Esophagus muscularis mucosa (tissue), 4 donors: ENCODE measurements at regions of chr3 and their contacts with region 1.

Region 1: DNA sequence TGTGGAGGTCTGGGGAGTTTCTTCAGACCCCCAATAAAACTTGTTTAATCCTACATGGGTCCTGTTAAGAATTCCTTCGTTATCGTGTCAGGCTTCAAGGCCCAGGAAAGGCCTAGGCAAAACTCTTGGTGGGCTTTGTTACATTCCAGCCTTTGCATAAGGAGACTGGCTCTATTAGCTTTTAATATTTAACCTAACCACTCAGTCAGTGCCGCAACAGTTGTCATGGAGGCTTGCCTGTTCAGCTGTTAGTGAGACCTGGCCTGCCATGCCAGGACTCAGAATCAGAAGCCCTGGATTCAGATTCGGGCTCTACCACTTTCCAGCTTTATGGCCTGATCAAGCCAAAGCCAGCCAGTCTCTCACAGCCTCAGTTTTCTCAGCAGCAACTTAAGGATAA is 19.6 kb downstream of the EIF1B start:
- DNase-seq: no peak
- H3K4me3 ChIP-seq: no peak overlapping the region
- H3K27ac ChIP-seq: no peak overlapping the region
- H3K4me1 ChIP-seq: peaks cover 0 to 5% (median 1%) of the 10 kb centered on the region in 4 donors
- H3K27me3 ChIP-seq: no peaks in the 10 kb centered on the region
- CTCF ChIP-seq: no peak
- EP300 ChIP-seq: no peak
- POLR2A ChIP-seq: no peak

Region 2: DNA sequence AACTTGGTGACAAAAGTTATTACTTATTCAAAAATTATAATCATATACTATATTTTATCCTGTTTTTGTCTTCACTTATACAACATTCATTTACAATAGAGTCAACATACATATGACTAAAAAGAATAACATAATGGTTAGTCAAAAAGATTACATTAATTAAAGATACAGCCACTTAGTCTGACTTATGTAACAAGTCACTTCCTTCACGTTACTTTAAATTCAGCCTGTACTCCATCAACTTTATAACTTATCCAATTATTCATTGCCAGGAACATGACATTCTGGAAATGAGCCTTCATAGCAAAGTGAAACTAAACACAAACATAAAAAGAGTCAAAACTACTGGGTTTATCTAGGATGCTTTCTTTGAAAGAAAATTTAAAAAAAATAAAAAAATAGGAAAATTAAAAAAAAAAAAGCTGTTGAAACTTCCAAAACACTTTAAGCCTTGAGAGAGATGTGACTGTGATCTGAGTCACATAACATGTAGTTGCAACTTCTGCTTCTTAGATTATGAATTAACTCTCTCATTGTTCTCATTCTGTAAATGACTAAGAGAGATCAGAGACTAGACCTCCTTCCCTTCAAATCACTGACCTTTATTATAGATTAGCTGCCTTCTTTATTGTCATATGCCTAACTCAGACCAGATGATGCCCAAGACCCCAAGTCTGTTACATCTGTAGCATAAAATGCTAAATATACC is 411.9 kb before region 1 on chr3:
- intact Hi-C with region 1: no loop called
- DNase-seq: no peak
- H3K4me3 ChIP-seq: no peak overlapping the region
- H3K27ac ChIP-seq: no peak overlapping the region
- H3K4me1 ChIP-seq: no peaks in the 10 kb centered on the region
- H3K27me3 ChIP-seq: no peaks in the 10 kb centered on the region
- CTCF ChIP-seq: no peak
- EP300 ChIP-seq: no peak
- POLR2A ChIP-seq: no peak

Region 3: DNA sequence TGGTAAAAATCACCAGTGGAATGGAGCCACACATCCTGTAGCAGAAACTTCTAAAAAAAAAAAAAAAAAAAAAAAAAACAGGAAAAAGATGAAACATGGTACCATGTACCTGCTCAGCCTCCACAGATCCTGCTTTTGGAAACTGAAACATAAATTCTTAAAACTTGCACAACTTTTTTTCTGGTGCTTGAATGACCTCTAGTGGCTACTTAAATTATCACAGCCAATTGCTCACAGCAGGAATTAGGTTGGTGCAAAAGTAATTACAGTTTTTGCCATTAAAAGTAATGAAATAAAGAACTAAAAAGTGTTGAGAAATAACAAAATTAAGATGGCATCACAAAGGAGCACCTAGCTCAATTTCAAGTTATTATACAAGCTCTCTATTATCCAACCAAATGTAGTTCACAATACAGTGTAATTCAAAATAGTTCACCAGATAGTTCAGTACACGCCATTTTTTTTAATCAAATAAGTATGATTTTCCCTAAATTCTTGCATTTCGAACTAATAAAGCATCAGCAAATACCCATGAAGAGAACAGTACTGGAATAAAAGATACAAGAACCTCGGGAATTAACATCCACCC is 1552.3 kb after region 1 on chr3:
- intact Hi-C with region 1: loop called (anchors 5 kb)
- DNase-seq: no peak
- H3K4me3 ChIP-seq: no peak overlapping the region
- H3K27ac ChIP-seq: no peak overlapping the region
- H3K4me1 ChIP-seq: no peaks in the 10 kb centered on the region
- H3K27me3 ChIP-seq: no peaks in the 10 kb centered on the region
- CTCF ChIP-seq: peak; percentile 68 to 70 (median 68)
- EP300 ChIP-seq: no peak
- POLR2A ChIP-seq: no peak